Tibial artery (tissue), 4 donors: ENCODE measurements at regions of chr2 and their contacts with region 1.

Region 1: GRCh38 chr2:189115126-189115525 is 64.4 kb downstream of the COL5A2 start:
- DNase-seq: no peak
- H3K4me3 ChIP-seq: no peak overlapping the region
- H3K27ac ChIP-seq: peak overlapping the region; percentile 44 to 49
- H3K4me1 ChIP-seq: peaks cover 0 to 66% (median 14%) of the 10 kb centered on the region in 4 donors
- H3K27me3 ChIP-seq: no peaks in the 10 kb centered on the region
- CTCF ChIP-seq: peak; percentile 23 to 34

Region 2: GRCh38 chr2:189150033-189150432 is 34.9 kb after region 1 on chr2:
- intact Hi-C with region 1: no loop called
- DNase-seq: no peak
- H3K4me3 ChIP-seq: no peak overlapping the region
- H3K27ac ChIP-seq: peak overlapping the region in 1 of 2 donors; percentile 5
- H3K4me1 ChIP-seq: peaks cover 0 to 93% (median 27%) of the 10 kb centered on the region in 4 donors
- H3K27me3 ChIP-seq: no peaks in the 10 kb centered on the region
- CTCF ChIP-seq: no peak

Region 3: GRCh38 chr2:189287982-189288521 is 172.9 kb after region 1 on chr2:
- intact Hi-C with region 1: loop called (anchors 10 kb)
- DNase-seq: no peak
- H3K4me3 ChIP-seq: no peak overlapping the region
- H3K27ac ChIP-seq: peak overlapping the region; percentile 10 to 38
- H3K4me1 ChIP-seq: peaks cover 0 to 31% (median 12%) of the 10 kb centered on the region in 4 donors
- H3K27me3 ChIP-seq: no peaks in the 10 kb centered on the region
- CTCF ChIP-seq: peak; percentile 60 to 61

Region 4: DNA sequence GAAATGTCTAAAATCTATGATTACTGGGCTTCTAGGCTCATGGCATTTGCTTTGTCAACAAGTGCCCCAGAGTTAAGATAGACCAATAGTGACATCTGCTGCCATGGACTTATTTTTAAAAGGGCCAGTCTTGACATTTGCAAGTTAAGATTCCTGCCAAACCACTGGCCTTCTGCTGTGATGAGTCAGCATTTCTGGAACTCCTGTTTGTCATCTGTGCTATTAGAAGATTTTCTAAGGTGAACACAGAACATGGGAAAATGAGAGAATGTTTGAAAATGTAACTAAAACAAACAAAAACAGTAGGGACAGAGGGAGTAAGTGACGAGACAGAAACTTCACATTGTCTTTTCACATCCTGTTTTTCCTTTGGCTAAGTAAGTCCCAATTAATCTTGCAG is 232.4 kb after region 1 on chr2:
- intact Hi-C with region 1: loop called (anchors 10 kb)
- DNase-seq: peak; percentile 55 to 71
- H3K4me3 ChIP-seq: no peak overlapping the region
- H3K27ac ChIP-seq: peak overlapping the region; percentile 79 to 84
- H3K4me1 ChIP-seq: peaks cover 0 to 44% (median 7%) of the 10 kb centered on the region in 4 donors
- H3K27me3 ChIP-seq: no peaks in the 10 kb centered on the region
- CTCF ChIP-seq: peak; percentile 14 to 33